Activated naive CD4-positive, alpha-beta T cell treated with anti-CD3 and anti-CD28 coated beads for 36 hours (primary cell): ENCODE measurements at regions of chr19 and their contacts with region 1.

Region 1: DNA sequence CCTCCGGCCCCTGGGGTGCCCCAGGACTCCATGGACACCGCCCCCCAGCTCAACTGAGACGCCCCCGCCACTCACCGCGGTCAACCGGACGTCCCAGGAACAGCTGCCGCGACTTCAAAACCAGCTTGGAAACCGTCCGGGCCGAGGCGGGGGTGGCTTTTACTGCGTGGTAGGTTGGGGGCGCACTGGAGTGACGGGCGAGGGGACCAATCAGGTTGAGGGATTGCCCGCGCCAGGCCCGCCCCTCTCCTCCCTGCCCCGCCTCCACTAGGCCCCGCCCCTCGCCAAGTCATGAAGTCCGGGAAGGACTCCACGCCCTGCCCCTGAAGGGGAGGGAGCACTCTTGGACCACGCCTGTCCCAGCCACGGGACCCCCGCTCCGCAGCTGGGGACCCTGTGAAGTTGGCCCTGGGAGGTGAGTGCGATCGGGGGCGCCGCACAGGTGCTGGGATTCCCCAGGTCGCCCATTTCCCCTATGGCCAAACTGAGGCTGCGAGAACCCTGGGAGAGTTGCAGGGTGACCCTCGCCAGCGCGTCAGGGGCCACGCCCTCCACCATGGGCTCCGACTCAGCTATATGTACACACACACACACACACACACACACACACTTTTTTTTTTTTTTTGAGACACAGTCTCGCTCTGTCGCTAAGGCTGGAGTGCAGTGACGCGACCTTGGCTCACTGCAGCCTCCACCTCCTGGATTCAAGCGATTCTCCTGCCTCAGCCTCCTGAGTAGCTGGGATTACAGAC is at the start of gene PLIN3:
- DNase-seq: peak; percentile 97
- H3K4me3 Mint-ChIP-seq: peak within 1 kb of the TSS; percentile 74
- H3K27ac Mint-ChIP-seq: peak within 1 kb of the TSS; percentile 36
- H3K4me1 Mint-ChIP-seq: peaks cover 19% of the 10 kb centered on the region
- H3K27me3 Mint-ChIP-seq: peaks cover 3% of the 10 kb centered on the region
- total RNA-seq, gene PLIN3: 16.1 to 17.1 TPM

Region 2: GRCh38 chr19:4851551-4852290 is 16.0 kb before region 1 on chr19:
- CTCF ChIA-PET with region 1: interaction called, 13 read pairs
- intact Hi-C with region 1: no loop called
- DNase-seq: peak; percentile 84
- H3K4me3 Mint-ChIP-seq: no peak overlapping the region
- H3K27ac Mint-ChIP-seq: no peak overlapping the region
- H3K4me1 Mint-ChIP-seq: no peaks in the 10 kb centered on the region
- H3K27me3 Mint-ChIP-seq: no peaks in the 10 kb centered on the region

Region 3: GRCh38 chr19:4909897-4910593 is 42.3 kb after region 1 on chr19:
- CTCF ChIA-PET with region 1: interaction called, 54 read pairs
- intact Hi-C with region 1: loop called (anchors 1 kb)
- DNase-seq: peak; percentile 97
- H3K4me3 Mint-ChIP-seq: peak overlapping the region; percentile 85
- H3K27ac Mint-ChIP-seq: peak overlapping the region; percentile 86
- H3K4me1 Mint-ChIP-seq: peaks cover 53% of the 10 kb centered on the region
- H3K27me3 Mint-ChIP-seq: no peaks in the 10 kb centered on the region

Region 4: GRCh38 chr19:4962085-4962619 is 94.4 kb after region 1 on chr19:
- CTCF ChIA-PET with region 1: no interaction called
- intact Hi-C with region 1: no loop called
- DNase-seq: no peak
- H3K4me3 Mint-ChIP-seq: no peak overlapping the region
- H3K27ac Mint-ChIP-seq: no peak overlapping the region
- H3K4me1 Mint-ChIP-seq: no peaks in the 10 kb centered on the region
- H3K27me3 Mint-ChIP-seq: no peaks in the 10 kb centered on the region